AG04450 (cell line): ENCODE measurements at regions of chr15 and their contacts with region 1.

Region 1: DNA sequence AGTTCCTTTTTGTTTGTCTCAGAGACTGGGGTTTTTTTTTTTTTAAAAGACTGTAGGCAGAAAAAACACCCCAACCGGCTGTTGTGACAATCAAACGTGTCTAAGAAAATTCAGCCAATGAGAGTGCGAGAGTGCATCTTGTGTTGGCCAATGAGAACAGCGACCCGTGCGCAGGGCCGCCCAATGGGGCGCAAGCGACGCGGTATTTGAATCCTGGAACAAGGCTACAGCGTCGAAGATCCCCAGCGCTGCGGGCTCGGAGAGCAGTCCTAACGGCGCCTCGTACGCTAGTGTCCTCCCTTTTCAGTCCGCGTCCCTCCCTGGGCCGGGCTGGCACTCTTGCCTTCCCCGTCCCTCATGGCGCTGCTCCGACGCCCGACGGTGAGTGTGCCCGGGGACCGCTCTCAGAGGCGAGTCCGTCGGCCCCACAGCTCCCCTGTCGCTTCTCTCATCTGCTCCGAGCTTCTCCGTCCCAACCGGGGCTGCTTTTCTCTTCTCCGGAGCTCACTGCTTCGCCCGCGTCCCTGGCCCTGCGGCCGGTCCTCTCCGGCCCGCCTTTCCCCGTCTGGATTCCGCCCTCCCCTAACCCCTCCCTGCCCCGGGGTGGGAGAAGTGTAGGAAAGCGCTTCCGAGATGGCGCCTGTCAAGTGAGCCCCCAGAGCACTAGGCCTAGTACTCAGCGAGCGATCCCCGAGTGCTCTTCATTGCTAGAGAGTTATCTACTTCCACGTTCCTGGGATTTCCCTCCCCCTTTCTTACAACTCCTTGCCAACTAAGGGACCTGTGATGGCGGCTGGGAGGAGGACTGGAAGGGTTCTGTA is at the start of gene CCNB2:
- DNase-seq: peak; percentile 83
- H3K4me3 ChIP-seq: peak within 1 kb of the TSS; percentile 92
- H3K27ac ChIP-seq: peak within 1 kb of the TSS; percentile 86
- H3K27me3 ChIP-seq: no peaks in the 10 kb centered on the region
- CTCF ChIP-seq: no peak
- polyA plus RNA-seq, gene CCNB2: 19.7 and 25.9 TPM in 2 replicates

Region 2: GRCh38 chr15:58980351-58980939 is 124.7 kb before region 1 on chr15:
- CTCF ChIA-PET with region 1: interaction called, 10 read pairs
- POLR2A ChIA-PET with region 1: no interaction called
- DNase-seq: no peak
- H3K4me3 ChIP-seq: no peak overlapping the region
- H3K27ac ChIP-seq: no peak overlapping the region
- H3K27me3 ChIP-seq: no peaks in the 10 kb centered on the region
- CTCF ChIP-seq: peak; percentile 54

Region 3: GRCh38 chr15:59339252-59339672 is 234.1 kb after region 1 on chr15:
- CTCF ChIA-PET with region 1: no interaction called
- POLR2A ChIA-PET with region 1: no interaction called
- DNase-seq: no peak
- H3K4me3 ChIP-seq: no peak overlapping the region
- H3K27ac ChIP-seq: no peak overlapping the region
- H3K27me3 ChIP-seq: no peaks in the 10 kb centered on the region
- CTCF ChIP-seq: no peak